Activated B cell treated with CpG ODN at 0.5 μM for 24 hours (primary cell): ENCODE measurements at regions of chr3 and their contacts with region 1.

Region 1: GRCh38 chr3:108145578-108145977 is 54.7 kb upstream of the CD47 start:
- DNase-seq: no peak
- ATAC-seq: no peak
- H3K4me3 Mint-ChIP-seq: no peak overlapping the region
- H3K27ac Mint-ChIP-seq: no peak overlapping the region
- H3K4me1 Mint-ChIP-seq: peaks cover 21% of the 10 kb centered on the region
- H3K27me3 Mint-ChIP-seq: no peaks in the 10 kb centered on the region
- CTCF ChIP-seq: no peak

Region 2: GRCh38 chr3:108159865-108160264 is 14.3 kb after region 1 on chr3:
- CTCF ChIA-PET with region 1: no interaction called
- POLR2A ChIA-PET with region 1: interaction called, 3 read pairs
- intact Hi-C with region 1: loop called (anchors 2 kb)
- DNase-seq: no peak
- ATAC-seq: no peak
- H3K4me3 Mint-ChIP-seq: no peak overlapping the region
- H3K27ac Mint-ChIP-seq: peak overlapping the region; percentile 50
- H3K4me1 Mint-ChIP-seq: peaks cover 39% of the 10 kb centered on the region
- H3K27me3 Mint-ChIP-seq: no peaks in the 10 kb centered on the region
- CTCF ChIP-seq: no peak

Region 3: DNA sequence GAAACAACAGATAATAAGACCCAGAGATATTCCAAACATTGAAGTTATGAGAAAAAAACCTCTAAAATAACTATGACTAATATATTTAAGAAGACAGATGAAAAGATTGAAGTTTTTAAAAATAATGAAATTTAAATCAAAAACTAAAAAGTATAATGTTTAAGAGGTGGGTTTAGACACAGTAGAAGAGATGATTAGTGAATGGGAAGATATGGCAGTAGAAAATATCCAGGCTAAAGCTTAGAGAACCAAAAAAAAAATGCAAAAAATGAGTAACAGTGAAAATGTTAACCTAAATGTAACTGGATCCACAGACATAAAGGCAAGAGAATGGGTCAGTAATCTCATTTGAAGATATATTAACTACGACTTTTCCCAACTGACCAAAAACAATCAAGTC is 559.5 kb after region 1 on chr3:
- CTCF ChIA-PET with region 1: no interaction called
- POLR2A ChIA-PET with region 1: no interaction called
- intact Hi-C with region 1: no loop called
- DNase-seq: no peak
- ATAC-seq: no peak
- H3K4me3 Mint-ChIP-seq: no peak overlapping the region
- H3K27ac Mint-ChIP-seq: no peak overlapping the region
- H3K4me1 Mint-ChIP-seq: no peaks in the 10 kb centered on the region
- H3K27me3 Mint-ChIP-seq: no peaks in the 10 kb centered on the region
- CTCF ChIP-seq: no peak